Activated CD8-positive, alpha-beta memory T cell treated with anti-CD3 and anti-CD28 coated beads, Interleukin-2, amount 10 ng/mL, durations not matched to agents 7 days and 5 days (primary cell): ENCODE measurements at regions of chr12 and their contacts with region 1.

Region 1: DNA sequence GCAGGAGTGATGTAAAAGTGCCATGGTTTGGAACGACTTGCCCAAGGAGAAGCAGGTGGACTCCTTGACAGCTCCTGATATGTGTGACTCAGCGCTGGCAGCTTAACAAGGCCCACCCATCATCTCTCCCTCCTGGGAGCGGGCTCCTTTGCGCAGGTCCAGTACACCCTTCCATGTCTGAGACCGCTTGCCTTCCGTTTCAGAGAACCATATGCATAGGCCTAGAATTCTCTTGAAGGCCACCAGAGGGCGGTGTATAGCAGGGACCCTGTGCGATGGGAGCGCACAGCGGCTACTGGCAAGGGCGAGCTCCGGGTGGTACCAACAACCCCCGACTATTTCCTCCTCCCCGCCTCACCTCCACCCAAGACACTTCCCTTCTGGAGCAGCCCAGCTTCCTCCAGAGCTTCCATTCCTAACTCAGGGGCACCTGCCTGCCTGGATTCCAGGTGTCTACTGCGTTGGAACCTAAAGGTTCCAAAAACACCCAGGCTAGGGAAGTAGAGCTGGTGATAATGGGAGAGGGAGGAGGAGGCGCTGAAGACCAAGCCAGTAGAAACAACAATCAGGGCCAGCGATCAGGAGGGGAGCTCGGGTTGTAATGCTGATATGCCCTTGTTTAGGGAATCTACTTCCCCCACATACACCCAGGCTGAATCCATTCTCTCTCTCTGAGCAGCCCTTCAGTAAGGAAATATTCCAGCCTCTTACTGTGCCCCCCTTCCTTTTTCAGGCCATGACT is 6.2 kb downstream of the DHH start:
- DNase-seq: peak; percentile 82
- ATAC-seq: peak; percentile 86
- H3K4me3 Mint-ChIP-seq: no peak overlapping the region
- H3K27ac Mint-ChIP-seq: peak overlapping the region; percentile 6
- H3K4me1 Mint-ChIP-seq: peaks cover 68% of the 10 kb centered on the region
- H3K27me3 Mint-ChIP-seq: peaks cover 45% of the 10 kb centered on the region

Region 2: GRCh38 chr12:48800971-48801370 is 287.4 kb before region 1 on chr12:
- CTCF ChIA-PET with region 1: no interaction called
- DNase-seq: no peak
- ATAC-seq: no peak
- H3K4me3 Mint-ChIP-seq: no peak overlapping the region
- H3K27ac Mint-ChIP-seq: no peak overlapping the region
- H3K4me1 Mint-ChIP-seq: peaks cover 24% of the 10 kb centered on the region
- H3K27me3 Mint-ChIP-seq: no peaks in the 10 kb centered on the region

Region 3: GRCh38 chr12:48927261-48927660 is 161.1 kb before region 1 on chr12:
- CTCF ChIA-PET with region 1: no interaction called
- DNase-seq: no peak
- ATAC-seq: no peak
- H3K4me3 Mint-ChIP-seq: no peak overlapping the region
- H3K27ac Mint-ChIP-seq: peak overlapping the region; percentile 56
- H3K4me1 Mint-ChIP-seq: peaks cover 38% of the 10 kb centered on the region
- H3K27me3 Mint-ChIP-seq: no peaks in the 10 kb centered on the region

Region 4: GRCh38 chr12:48988030-48988649 is 100.2 kb before region 1 on chr12:
- CTCF ChIA-PET with region 1: interaction called, 11 read pairs
- DNase-seq: peak; percentile 82
- ATAC-seq: peak; percentile 88
- H3K4me3 Mint-ChIP-seq: no peak overlapping the region
- H3K27ac Mint-ChIP-seq: no peak overlapping the region
- H3K4me1 Mint-ChIP-seq: peaks cover 7% of the 10 kb centered on the region
- H3K27me3 Mint-ChIP-seq: peaks cover 66% of the 10 kb centered on the region

Region 5: DNA sequence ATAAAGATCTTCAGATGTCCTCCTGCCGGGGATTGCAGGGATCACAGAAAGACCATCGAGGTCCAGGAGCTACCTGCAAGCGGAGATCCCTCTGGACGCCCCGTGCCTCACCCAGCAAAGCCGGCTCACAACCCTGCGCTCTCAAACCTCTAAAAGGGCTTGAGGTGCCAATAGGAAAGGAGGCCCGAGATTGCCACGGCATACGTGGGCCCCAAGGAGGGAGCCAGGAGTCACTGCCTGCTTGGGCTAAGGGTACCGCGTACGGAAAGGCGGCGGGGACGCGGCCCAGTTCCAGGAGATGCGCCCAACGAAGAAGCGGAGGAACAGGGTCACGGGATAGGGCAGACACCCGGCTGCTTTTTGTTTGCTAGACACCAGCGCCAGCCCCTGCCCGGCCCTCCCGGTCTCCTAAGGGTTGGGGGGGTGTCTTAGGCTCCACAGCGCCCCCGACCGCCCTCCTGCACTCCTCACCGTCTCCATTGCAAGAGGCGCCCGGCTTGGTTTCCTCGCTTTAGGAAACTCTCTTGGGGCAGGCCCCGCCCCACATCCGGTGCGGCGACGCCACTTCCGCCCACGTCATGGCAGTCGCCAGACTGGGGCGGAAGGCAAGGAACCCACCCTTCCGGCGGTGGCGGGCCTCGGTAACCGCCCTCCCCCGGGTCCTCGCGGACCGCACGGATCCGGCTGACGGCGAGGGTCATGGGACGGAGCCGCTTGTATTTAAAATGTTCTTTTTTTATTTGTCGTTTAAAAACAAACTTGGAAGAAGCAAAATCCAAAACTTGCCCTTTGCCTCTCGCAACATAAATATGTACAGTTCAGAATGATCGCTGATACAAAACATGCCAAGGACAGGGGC is 69.9 kb before region 1 on chr12 and contains the start of gene PRKAG1:
- CTCF ChIA-PET with region 1: interaction called, 12 read pairs
- DNase-seq: peak; percentile 98
- ATAC-seq: peak; percentile 92
- H3K4me3 Mint-ChIP-seq: peak within 1 kb of the TSS; percentile 86
- H3K27ac Mint-ChIP-seq: peak within 1 kb of the TSS; percentile 97
- H3K4me1 Mint-ChIP-seq: peaks cover 28% of the 10 kb centered on the region
- H3K27me3 Mint-ChIP-seq: no peaks in the 10 kb centered on the region
- total RNA-seq, gene PRKAG1: 58.9 to 66.0 TPM

Region 6: DNA sequence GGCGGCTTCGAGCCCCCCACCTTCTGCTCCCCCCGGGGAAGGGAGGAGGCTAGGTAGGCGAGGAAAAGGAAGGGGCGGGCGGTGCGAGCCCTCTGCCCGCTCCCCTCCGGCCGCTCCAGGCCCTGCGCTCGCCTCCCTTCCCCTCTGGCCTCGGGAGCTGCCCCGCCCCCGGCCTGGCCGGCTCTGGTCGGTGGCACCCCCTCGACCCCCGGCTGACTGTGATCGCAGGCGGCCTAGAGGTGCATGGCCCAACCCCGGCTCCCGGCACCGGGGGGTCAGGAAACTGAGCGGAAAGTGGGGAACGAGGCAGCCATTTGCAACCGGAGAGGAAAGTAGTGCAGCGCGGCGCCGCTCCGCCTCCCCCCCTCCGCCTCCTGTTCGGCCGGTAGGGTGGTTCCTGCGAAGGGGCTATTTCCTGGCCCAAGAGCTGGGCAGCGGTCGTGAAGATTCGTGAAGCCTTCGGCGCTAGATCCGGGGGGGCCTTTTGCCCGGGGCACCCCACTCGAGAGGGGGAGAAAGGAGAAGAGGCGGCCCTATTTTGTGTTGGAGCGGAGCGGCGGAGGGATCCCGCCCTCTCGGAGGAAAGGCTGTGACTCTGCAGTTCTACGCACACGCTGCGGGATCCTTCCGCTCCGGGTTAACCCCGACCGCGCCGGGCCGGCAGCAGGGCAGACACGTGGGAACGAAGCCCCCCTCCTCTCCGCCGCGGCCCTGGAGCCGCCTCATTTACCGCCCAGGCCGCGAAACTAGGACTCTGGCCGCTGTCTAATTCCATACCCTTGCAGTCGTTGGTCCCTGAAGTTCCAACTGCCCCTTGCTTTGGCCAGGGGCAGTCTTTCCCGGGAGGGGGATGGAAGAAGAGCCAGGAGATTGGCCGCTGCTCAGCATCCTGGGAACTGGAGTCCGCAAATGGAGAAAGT is 27.9 kb before region 1 on chr12 and contains the start of gene KMT2D:
- CTCF ChIA-PET with region 1: interaction called, 222 read pairs
- DNase-seq: peak; percentile 92
- ATAC-seq: peak; percentile 82
- H3K4me3 Mint-ChIP-seq: peak within 1 kb of the TSS; percentile 91
- H3K27ac Mint-ChIP-seq: peak within 1 kb of the TSS; percentile 95
- H3K4me1 Mint-ChIP-seq: peaks cover 51% of the 10 kb centered on the region
- H3K27me3 Mint-ChIP-seq: no peaks in the 10 kb centered on the region
- total RNA-seq, gene KMT2D: 107 to 132 TPM

Region 7: GRCh38 chr12:49110464-49111155 is 22.2 kb after region 1 on chr12 and contains the start of gene LMBR1L:
- CTCF ChIA-PET with region 1: interaction called, 80 read pairs
- DNase-seq: peak; percentile 99
- ATAC-seq: peak; percentile 97
- H3K4me3 Mint-ChIP-seq: peak within 1 kb of the TSS; percentile 94
- H3K27ac Mint-ChIP-seq: peak within 1 kb of the TSS; percentile 87
- H3K4me1 Mint-ChIP-seq: peaks cover 28% of the 10 kb centered on the region
- H3K27me3 Mint-ChIP-seq: no peaks in the 10 kb centered on the region
- total RNA-seq, gene LMBR1L: 46.9 to 53.4 TPM

Region 8: DNA sequence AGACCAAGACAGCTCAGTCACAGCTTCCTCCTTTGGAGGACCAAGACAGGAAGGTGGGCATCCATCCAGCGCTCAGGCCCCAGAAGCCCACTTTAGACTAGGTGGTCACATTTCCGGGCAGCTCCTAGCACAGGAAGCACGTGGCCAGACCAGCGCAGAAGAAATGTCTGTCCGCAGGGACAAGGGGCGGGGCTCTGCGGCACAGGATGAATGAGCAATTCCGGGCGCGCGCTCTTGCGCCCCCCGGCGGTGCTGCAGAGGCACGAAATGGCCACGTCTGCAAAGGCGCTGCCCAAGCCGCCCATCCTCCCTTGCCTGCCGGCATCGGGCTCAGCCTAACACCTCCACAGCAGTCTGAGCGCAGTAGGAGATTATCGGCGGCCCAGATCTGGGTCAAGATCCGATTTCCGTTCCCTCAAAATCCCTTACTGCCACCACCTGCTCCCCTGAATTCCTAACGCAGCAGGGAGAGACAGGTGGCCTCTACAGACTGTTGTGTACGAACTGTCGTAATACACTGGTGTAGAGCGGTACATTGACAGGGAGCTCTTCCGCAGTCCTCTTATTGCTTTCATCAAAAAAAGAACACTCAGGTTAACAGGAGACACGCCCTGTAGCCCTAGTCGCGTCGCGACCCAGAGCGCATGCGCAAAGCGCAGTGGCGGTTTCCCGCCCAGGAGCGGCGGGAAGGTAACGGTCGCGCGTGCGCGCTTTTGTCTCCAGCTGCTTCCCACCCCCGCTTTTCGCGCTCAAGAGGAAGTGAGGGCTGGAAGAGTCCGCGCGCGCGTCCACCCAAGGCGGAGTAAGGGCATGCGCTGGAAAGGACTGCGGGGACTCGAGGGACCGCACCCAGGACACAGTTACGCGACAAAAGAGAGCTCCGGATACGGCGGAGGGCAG is 42.0 kb after region 1 on chr12:
- CTCF ChIA-PET with region 1: interaction called, 38 read pairs
- DNase-seq: peak; percentile 95
- ATAC-seq: peak; percentile 63
- H3K4me3 Mint-ChIP-seq: peak overlapping the region; percentile 84
- H3K27ac Mint-ChIP-seq: peak overlapping the region; percentile 99
- H3K4me1 Mint-ChIP-seq: peaks cover 51% of the 10 kb centered on the region
- H3K27me3 Mint-ChIP-seq: peaks cover 6% of the 10 kb centered on the region